ENCODE measurements at regions of chr5 and their contacts with region 1.

Region 1: GRCh38 chr5:150946351-150946905 is 41.6 kb upstream of the ZNF300 start:
- DNase-seq: no peak
- H3K4me3 Mint-ChIP-seq: no peak overlapping the region
- H3K27ac Mint-ChIP-seq: no peak overlapping the region
- H3K4me1 Mint-ChIP-seq: no peaks in the 10 kb centered on the region
- H3K27me3 Mint-ChIP-seq: no peaks in the 10 kb centered on the region
- CTCF ChIP-seq: no peak

Region 2: DNA sequence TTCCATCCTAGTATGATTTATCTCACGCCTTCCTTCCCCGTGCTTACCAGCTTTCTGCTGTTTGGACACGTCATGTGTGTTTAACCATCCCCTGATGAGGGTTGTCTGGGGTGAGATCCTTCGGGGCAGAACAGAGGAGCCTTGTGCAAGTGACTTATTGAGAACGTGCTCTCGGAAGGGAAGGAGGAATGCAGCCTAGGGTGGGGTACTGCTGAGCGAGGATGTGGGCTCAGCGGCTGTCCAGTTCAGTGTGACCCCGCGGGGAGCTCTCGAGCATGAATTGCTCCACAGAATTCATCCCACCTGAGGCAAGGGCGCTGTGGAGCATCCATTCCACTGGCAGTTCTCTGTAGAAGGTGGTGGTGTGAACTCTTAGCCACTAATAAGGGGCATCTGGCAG is 281.4 kb before region 1 on chr5:
- CTCF ChIA-PET with region 1: no interaction called
- POLR2A ChIA-PET with region 1: no interaction called
- intact Hi-C with region 1: no loop called
- DNase-seq: no peak
- H3K4me3 Mint-ChIP-seq: no peak overlapping the region
- H3K27ac Mint-ChIP-seq: no peak overlapping the region
- H3K4me1 Mint-ChIP-seq: no peaks in the 10 kb centered on the region
- H3K27me3 Mint-ChIP-seq: peaks cover 18% of the 10 kb centered on the region
- CTCF ChIP-seq: no peak

Region 3: GRCh38 chr5:150862070-150862469 is 84.4 kb before region 1 on chr5:
- CTCF ChIA-PET with region 1: no interaction called
- POLR2A ChIA-PET with region 1: no interaction called
- intact Hi-C with region 1: loop called (anchors 1 kb)
- DNase-seq: no peak
- H3K4me3 Mint-ChIP-seq: no peak overlapping the region
- H3K27ac Mint-ChIP-seq: no peak overlapping the region
- H3K4me1 Mint-ChIP-seq: no peaks in the 10 kb centered on the region
- H3K27me3 Mint-ChIP-seq: no peaks in the 10 kb centered on the region
- CTCF ChIP-seq: no peak

Region 4: DNA sequence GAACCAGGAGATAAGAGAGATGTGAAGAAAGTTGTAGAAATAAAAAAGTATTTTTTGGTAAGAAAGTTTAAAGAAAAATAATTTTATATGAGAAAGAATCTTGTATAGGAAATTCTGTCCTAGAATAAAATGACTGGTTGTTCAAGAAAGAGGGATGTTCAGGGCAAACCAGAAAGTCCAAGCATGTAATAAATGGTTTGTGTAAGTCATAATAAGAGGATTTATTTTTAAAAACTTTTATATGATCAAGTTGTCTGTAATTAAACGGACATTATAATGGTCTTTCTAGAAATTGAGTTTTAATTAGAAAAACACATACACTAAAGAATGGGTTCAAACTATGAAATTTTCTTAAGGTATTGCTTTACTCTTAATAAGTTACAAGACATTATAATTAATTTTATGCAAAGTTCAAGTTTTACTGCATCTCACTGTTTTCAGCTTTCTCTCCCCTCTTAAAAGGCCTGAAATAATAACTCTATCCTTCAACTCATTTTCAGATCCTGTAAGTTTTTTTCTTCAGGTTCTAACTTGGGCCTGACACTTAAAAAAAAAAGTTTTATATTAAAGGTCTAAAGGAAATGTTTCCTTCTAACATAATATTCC is 14.5 kb after region 1 on chr5:
- CTCF ChIA-PET with region 1: no interaction called
- POLR2A ChIA-PET with region 1: no interaction called
- intact Hi-C with region 1: no loop called
- DNase-seq: peak; percentile 20
- H3K4me3 Mint-ChIP-seq: no peak overlapping the region
- H3K27ac Mint-ChIP-seq: no peak overlapping the region
- H3K4me1 Mint-ChIP-seq: no peaks in the 10 kb centered on the region
- H3K27me3 Mint-ChIP-seq: peaks cover 11% of the 10 kb centered on the region
- CTCF ChIP-seq: no peak